ENCODE measurements at regions of chr3 and their contacts with region 1.

Region 1: DNA sequence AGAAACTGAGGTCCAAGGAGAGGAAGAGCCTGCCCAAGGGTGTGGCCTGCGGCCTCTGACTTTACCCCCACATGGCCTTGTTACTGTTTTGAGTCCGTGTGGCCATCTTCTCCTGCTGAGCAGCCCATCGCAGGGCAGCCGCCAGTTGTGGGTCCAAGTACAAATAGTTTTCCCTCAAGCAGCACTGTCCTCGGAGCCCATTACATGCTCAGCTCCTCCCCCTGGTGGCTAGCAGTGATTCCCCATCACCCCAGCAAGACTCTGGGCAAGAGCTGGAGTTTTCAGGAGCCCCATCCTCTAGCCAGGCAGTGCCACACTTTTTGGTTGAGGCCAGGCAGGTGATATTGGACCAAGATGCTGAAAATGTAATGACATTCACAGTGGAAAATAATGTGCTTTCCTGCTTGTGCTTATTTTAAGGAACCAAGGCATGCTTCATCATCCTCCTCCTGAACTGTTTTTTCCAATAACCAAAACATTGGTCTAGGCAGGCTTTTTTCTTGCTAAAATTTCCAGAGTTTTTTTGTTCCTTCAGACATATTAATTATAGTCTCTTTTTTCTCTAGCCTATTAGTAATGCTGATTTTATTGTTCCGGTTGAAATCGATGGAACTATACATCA is 23.2 kb upstream of the VILL start:
- DNase-seq: no peak
- H3K4me3 ChIP-seq: no peak overlapping the region
- H3K27ac ChIP-seq: no peak overlapping the region
- H3K4me1 ChIP-seq: peaks cover 29 to 34% (median 31%) of the 10 kb centered on the region in 4 donors
- H3K27me3 ChIP-seq: no peaks in the 10 kb centered on the region
- CTCF ChIP-seq: peak; percentile 82 to 88 (median 82)
- EP300 ChIP-seq: no peak
- POLR2A ChIP-seq: no peak

Region 2: DNA sequence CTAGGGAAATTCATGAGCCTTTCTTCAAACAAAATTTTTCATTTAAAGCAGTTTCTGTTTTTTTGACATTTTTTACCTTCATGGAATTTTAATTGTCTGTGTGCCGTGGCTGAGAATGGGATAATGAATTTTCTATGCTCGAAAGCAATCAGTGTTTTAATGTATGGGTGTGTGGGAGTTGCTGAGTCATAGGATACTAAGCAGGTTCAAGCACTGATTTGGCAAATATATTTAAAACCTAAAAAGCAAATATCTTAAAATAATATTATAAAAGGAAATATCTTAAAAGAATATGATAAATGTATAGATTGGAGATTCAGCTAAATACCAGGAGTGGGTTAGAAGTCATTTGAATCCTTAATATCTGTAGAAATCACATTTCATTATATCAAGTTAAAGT is 619.4 kb before region 1 on chr3:
- intact Hi-C with region 1: no loop called
- DNase-seq: no peak
- H3K4me3 ChIP-seq: no peak overlapping the region
- H3K27ac ChIP-seq: no peak overlapping the region
- H3K4me1 ChIP-seq: peaks cover 0 to 9% (median 0%) of the 10 kb centered on the region in 4 donors
- H3K27me3 ChIP-seq: no peaks in the 10 kb centered on the region
- CTCF ChIP-seq: no peak
- EP300 ChIP-seq: no peak
- POLR2A ChIP-seq: no peak

Region 3: GRCh38 chr3:37787153-37787867 is 180.1 kb before region 1 on chr3:
- intact Hi-C with region 1: no loop called
- DNase-seq: no peak
- H3K4me3 ChIP-seq: peak overlapping the region in 3 of 4 donors; percentile 8 to 21 (median 13)
- H3K27ac ChIP-seq: peak overlapping the region; percentile 69 to 77 (median 74)
- H3K4me1 ChIP-seq: peaks cover 38 to 43% (median 42%) of the 10 kb centered on the region in 4 donors
- H3K27me3 ChIP-seq: no peaks in the 10 kb centered on the region
- CTCF ChIP-seq: no peak
- EP300 ChIP-seq: no peak
- POLR2A ChIP-seq: no peak

Region 4: GRCh38 chr3:37856381-37856780 is 111.0 kb before region 1 on chr3:
- intact Hi-C with region 1: loop called (anchors 2 kb)
- DNase-seq: no peak
- H3K4me3 ChIP-seq: no peak overlapping the region
- H3K27ac ChIP-seq: no peak overlapping the region
- H3K4me1 ChIP-seq: peaks cover 20 to 36% (median 30%) of the 10 kb centered on the region in 4 donors
- H3K27me3 ChIP-seq: no peaks in the 10 kb centered on the region
- CTCF ChIP-seq: no peak
- EP300 ChIP-seq: no peak
- POLR2A ChIP-seq: no peak